ENCODE measurements at regions of chr6 and their contacts with region 1.

Region 1: DNA sequence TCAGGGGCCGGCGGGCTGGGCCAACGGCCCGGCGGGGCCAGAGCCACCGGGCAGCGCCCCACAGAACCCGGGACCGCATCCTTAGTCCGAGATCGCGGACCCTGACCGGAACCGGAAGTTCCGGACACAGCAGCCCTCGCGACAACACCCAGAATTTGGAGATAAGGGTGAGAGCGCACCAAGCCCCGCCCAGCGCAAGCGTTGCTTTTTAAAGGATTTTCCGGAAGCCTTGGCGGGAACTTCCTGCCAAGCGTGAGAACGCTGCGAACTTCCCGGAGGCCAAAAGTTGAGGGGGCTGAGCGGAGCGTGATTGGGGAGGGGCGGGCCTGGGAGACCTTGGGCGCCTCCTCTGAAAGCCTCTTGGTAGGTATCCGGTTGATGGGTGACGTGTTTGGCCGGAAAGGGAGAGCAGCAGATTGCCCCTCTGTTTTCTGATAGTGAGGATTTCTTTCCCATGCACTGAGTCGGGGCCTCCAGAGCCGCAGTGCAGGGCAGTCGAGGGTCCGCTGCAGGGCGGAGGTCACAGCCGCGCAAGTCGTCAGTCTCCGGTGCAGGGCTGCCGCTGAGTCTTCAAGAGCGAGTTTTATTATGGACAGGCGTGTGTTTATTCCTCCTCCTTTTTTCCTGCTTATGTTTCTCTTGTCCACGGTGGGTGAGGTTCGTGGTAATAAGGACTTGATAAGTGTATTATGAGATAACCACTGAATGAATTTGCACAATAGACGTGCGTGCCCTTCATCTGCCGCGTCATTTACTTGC is at the start of gene MTRF1L:
- DNase-seq: peak; percentile 89
- H3K4me3 Mint-ChIP-seq: peak within 1 kb of the TSS; percentile 91
- H3K27ac Mint-ChIP-seq: peak within 1 kb of the TSS; percentile 88
- H3K4me1 Mint-ChIP-seq: peaks cover 39% of the 10 kb centered on the region
- H3K27me3 Mint-ChIP-seq: peaks cover 1% of the 10 kb centered on the region
- total RNA-seq, gene MTRF1L: 20.8 to 21.5 TPM

Region 2: GRCh38 chr6:152975204-152975915 is 27.4 kb before region 1 on chr6:
- CTCF ChIA-PET with region 1: interaction called, 3 read pairs
- POLR2A ChIA-PET with region 1: interaction called, 14 read pairs
- DNase-seq: no peak
- H3K4me3 Mint-ChIP-seq: peak overlapping the region; percentile 56
- H3K27ac Mint-ChIP-seq: peak overlapping the region; percentile 65
- H3K4me1 Mint-ChIP-seq: peaks cover 68% of the 10 kb centered on the region
- H3K27me3 Mint-ChIP-seq: no peaks in the 10 kb centered on the region

Region 3: GRCh38 chr6:152982768-152983636 is 19.8 kb before region 1 on chr6 and contains the start of gene FBXO5:
- CTCF ChIA-PET with region 1: interaction called, 7 read pairs
- POLR2A ChIA-PET with region 1: interaction called, 151 read pairs
- DNase-seq: peak; percentile 98
- H3K4me3 Mint-ChIP-seq: peak within 1 kb of the TSS; percentile 90
- H3K27ac Mint-ChIP-seq: peak within 1 kb of the TSS; percentile 96
- H3K4me1 Mint-ChIP-seq: peaks cover 51% of the 10 kb centered on the region
- H3K27me3 Mint-ChIP-seq: no peaks in the 10 kb centered on the region
- total RNA-seq, gene FBXO5: 68.7 to 71.2 TPM

Measured in activated CD4-positive, alpha-beta memory T cell treated with anti-CD3 and anti-CD28 coated beads, Interleukin-2, amount 10 ng/mL, durations not matched to agents 7 days and 5 days (primary cell).